CD4-positive, alpha-beta T cell (primary cell): ENCODE measurements at regions of chr2 and their contacts with region 1.

Region 1: DNA sequence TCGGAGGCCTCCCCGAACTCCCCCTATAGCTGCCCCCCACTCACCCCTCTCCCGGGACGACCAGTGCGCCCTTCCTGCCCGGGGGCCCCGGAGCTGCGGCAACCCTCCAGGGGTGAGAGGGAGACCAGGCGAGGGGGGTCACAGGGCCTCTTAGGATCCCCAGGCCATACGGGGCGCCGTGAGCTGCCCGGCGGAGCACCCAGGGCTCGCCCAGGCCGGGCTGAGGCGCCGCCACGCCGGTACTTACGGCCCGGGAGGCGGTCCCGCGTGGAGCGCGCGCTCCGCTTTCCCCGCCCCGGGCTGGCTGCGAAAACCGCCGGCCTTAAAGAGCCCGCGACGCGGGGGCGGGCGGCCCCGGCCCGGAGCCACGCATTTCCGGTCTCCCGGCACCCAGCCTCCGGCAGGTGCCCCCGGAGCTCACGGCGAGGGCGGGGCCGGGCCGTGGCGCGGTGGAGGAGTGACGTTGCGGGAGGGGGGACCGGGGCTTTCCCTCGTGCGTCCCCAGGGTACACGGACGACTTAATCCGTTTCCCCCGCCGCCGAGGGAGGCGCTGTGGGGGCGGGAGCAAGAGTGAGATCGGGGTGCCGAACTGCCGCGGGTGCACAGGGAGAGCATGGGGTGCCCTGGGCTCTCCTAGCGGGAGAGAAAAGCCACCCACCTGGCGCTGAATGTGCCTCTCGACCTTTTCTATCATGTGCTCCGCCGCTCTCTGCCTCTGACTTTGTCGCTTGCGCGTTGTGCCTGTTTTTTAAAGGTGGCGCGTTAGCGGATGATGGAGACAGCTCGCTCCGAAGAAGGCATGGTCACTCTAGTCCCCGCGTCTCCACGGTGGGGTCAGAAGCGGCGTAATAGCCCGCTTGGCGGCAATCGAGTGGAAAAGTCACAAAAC is at the start of gene METTL21A:
- DNase-seq: peak; percentile 89 to 99 (median 92)
- ATAC-seq: peak; percentile 77
- H3K4me3 ChIP-seq: peak within 1 kb of the TSS; percentile 99
- H3K4me3 Mint-ChIP-seq: peak within 1 kb of the TSS; percentile 98
- H3K27ac ChIP-seq: peak within 1 kb of the TSS; percentile 97 to 98
- H3K27ac Mint-ChIP-seq: peak within 1 kb of the TSS; percentile 96
- H3K4me1 ChIP-seq: peaks cover 46% of the 10 kb centered on the region
- H3K4me1 Mint-ChIP-seq: peaks cover 51% of the 10 kb centered on the region
- H3K27me3 ChIP-seq: no peaks in the 10 kb centered on the region
- H3K27me3 Mint-ChIP-seq: no peaks in the 10 kb centered on the region
- CTCF ChIP-seq: peak; percentile 68
- total RNA-seq, gene METTL21A: 10.8 to 11.9 TPM

Region 2: DNA sequence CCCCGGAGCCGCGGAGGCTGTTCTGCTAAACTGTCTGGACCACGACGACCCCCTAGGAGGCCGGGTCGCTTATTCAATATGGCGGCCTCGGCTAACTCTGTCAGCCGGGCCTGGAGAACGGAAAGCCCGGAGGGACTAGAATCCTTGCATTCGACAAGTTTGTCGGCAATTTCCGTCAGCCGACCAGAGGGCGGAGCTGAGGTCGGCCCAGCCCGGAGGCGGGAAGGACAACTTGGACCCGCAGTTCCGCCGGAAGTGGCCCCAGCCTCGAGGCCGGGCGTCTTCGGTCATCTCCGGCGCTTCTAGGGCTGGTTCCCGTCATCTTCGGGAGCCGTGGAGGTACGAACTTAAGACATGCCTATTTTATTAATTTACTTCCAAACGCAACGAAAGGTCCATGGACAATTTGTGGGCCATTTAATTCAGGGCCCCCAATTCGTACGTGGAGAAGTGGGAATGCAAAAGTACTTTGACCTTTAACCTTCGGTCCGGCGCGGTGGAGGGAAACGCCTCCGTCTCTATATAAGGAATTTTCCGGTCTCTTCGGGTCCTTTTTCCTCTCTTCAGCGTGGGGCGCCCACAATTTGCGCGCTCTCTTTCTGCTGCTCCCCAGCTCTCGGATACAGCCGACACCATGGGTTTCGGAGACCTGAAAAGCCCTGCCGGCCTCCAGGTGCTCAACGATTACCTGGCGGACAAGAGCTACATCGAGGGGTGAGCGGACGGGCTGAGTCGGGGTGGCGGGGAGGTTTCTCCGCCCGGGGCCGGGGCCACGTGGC is 1465.7 kb before region 1 on chr2 and contains the starts of genes EEF1B2 and NDUFS1:
- CTCF ChIA-PET with region 1: interaction called, 4 read pairs
- POLR2A ChIA-PET with region 1: interaction called, 8 read pairs
- intact Hi-C with region 1: loop called in 1 of 2 experiments (anchors 10 kb)
- DNase-seq: peak; percentile 91 to 99 (median 95)
- ATAC-seq: peak; percentile 82
- H3K4me3 ChIP-seq: peak within 1 kb of the TSS; percentile 82
- H3K4me3 Mint-ChIP-seq: peak within 1 kb of the TSS; percentile 99
- H3K27ac ChIP-seq: peak within 1 kb of the TSS; percentile 85 to 92
- H3K27ac Mint-ChIP-seq: peak within 1 kb of the TSS; percentile 97
- H3K4me1 ChIP-seq: peaks cover 39% of the 10 kb centered on the region
- H3K4me1 Mint-ChIP-seq: peaks cover 71% of the 10 kb centered on the region
- H3K27me3 ChIP-seq: no peaks in the 10 kb centered on the region
- H3K27me3 Mint-ChIP-seq: no peaks in the 10 kb centered on the region
- CTCF ChIP-seq: no peak
- total RNA-seq, gene EEF1B2: 1,109 to 1,132 TPM
- total RNA-seq, gene NDUFS1: 33.4 to 34.3 TPM

Region 3: GRCh38 chr2:206971805-206972204 is 653.5 kb before region 1 on chr2:
- CTCF ChIA-PET with region 1: no interaction called
- POLR2A ChIA-PET with region 1: no interaction called
- intact Hi-C with region 1: no loop called
- DNase-seq: no peak
- ATAC-seq: no peak
- H3K4me3 ChIP-seq: no peak overlapping the region
- H3K4me3 Mint-ChIP-seq: no peak overlapping the region
- H3K27ac ChIP-seq: no peak overlapping the region
- H3K27ac Mint-ChIP-seq: no peak overlapping the region
- H3K4me1 ChIP-seq: no peaks in the 10 kb centered on the region
- H3K4me1 Mint-ChIP-seq: no peaks in the 10 kb centered on the region
- H3K27me3 ChIP-seq: no peaks in the 10 kb centered on the region
- H3K27me3 Mint-ChIP-seq: peaks cover 8% of the 10 kb centered on the region
- CTCF ChIP-seq: no peak

Region 4: DNA sequence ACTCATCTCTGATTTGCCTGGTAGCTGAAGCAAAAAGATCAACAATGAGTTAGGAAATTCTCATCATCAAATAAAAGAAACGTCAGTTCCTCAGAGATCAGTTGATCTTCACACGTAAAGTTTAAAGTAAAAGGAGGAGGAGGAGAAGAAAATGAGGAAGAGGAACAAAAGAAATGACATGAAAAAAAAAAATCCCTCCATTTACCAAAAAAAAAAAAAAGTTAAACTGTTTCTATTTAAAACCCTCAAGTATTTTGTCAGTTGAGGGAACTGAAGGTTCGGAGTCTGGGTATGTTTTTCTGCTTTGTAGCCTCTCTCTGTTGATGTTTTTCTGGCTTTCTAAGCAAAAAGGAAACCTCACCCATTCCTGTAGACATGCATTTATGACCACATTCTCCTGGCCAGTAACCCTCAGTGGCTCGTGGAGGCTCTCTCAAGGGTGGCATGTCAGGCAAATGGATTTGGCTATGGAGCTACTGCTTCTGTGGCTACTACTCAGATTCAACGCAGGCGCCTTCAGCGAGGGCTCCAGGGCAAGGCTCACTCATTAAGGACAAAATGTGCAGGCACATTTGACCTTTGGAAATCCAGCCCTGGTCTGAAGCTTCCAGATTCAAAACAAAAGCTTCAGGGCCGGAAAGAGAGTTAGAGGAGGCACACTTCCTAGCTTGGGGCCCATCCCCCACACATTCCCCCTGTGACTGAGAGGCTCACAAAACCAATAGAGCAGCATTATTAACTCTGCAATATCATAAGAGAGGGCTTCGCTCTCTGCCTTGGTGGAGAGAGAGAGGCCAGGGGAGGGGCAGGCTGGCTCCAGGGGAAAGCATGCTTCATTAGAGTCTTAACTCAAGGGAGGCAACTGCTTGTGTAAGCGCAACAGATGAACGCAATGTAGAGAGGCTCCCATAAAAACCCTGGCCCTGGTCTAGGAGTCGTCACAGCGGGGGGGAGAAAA is 481.8 kb before region 1 on chr2:
- CTCF ChIA-PET with region 1: no interaction called
- POLR2A ChIA-PET with region 1: interaction called, 10 read pairs
- intact Hi-C with region 1: no loop called
- DNase-seq: peak; percentile 35 to 80 (median 60)
- ATAC-seq: peak; percentile 74
- H3K4me3 ChIP-seq: peak overlapping the region; percentile 52
- H3K4me3 Mint-ChIP-seq: peak overlapping the region; percentile 49
- H3K27ac ChIP-seq: peak overlapping the region; percentile 89 to 91
- H3K27ac Mint-ChIP-seq: peak overlapping the region; percentile 89
- H3K4me1 ChIP-seq: peaks cover 43% of the 10 kb centered on the region
- H3K4me1 Mint-ChIP-seq: peaks cover 69% of the 10 kb centered on the region
- H3K27me3 ChIP-seq: no peaks in the 10 kb centered on the region
- H3K27me3 Mint-ChIP-seq: no peaks in the 10 kb centered on the region
- CTCF ChIP-seq: no peak

Region 5: GRCh38 chr2:207710814-207711740 is 85.8 kb after region 1 on chr2 and contains the start of gene CCNYL1:
- CTCF ChIA-PET with region 1: interaction called, 29 read pairs
- POLR2A ChIA-PET with region 1: interaction called, 102 read pairs
- intact Hi-C with region 1: loop called (anchors 1 to 2 kb)
- DNase-seq: peak; percentile 95 to 99 (median 97)
- ATAC-seq: peak; percentile 97
- H3K4me3 ChIP-seq: peak within 1 kb of the TSS; percentile 98
- H3K4me3 Mint-ChIP-seq: peak within 1 kb of the TSS; percentile 95
- H3K27ac ChIP-seq: peak within 1 kb of the TSS; percentile 49 to 75
- H3K27ac Mint-ChIP-seq: peak within 1 kb of the TSS; percentile 82
- H3K4me1 ChIP-seq: peaks cover 23% of the 10 kb centered on the region
- H3K4me1 Mint-ChIP-seq: peaks cover 23% of the 10 kb centered on the region
- H3K27me3 ChIP-seq: no peaks in the 10 kb centered on the region
- H3K27me3 Mint-ChIP-seq: no peaks in the 10 kb centered on the region
- CTCF ChIP-seq: no peak
- total RNA-seq, gene CCNYL1: 8.7 to 11.1 TPM

Region 6: DNA sequence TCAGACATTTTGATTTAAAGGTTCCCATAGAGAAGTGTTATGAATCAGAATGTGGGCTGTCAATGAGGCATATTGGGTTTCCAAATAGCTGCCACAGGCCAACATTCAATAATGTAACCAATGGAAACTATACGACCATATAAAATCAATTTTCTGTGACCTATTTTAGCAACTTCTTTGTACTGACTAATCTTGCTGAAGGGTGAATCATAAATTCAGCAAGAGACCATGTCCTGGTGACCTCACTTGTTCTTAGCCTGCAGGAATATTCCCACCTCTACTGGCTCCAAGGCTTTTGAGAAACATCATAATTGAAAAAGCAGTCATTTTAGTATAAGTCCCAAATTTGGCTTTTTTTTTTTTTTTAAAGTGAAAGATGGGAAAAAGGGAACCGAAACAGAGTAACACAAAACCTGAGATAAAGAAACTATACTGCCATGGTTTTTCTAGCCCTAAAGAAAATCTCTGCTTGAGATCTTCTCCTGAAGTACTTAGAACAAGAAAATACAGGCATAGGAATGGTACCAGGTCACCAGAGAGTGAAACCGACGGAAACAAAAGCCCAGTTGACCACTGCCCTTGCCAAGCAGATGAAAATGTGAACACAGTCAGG is 368.0 kb after region 1 on chr2:
- CTCF ChIA-PET with region 1: no interaction called
- POLR2A ChIA-PET with region 1: no interaction called
- intact Hi-C with region 1: no loop called
- DNase-seq: no peak
- ATAC-seq: no peak
- H3K4me3 ChIP-seq: no peak overlapping the region
- H3K4me3 Mint-ChIP-seq: no peak overlapping the region
- H3K27ac ChIP-seq: no peak overlapping the region
- H3K27ac Mint-ChIP-seq: no peak overlapping the region
- H3K4me1 ChIP-seq: no peaks in the 10 kb centered on the region
- H3K4me1 Mint-ChIP-seq: peaks cover 38% of the 10 kb centered on the region
- H3K27me3 ChIP-seq: no peaks in the 10 kb centered on the region
- H3K27me3 Mint-ChIP-seq: no peaks in the 10 kb centered on the region
- CTCF ChIP-seq: no peak

Region 7: GRCh38 chr2:208025037-208025813 is 400.0 kb after region 1 on chr2 and contains the start of gene PLEKHM3:
- CTCF ChIA-PET with region 1: interaction called, 5 read pairs
- POLR2A ChIA-PET with region 1: interaction called, 19 read pairs
- intact Hi-C with region 1: loop called in 1 of 2 experiments (anchors 5 kb)
- DNase-seq: peak; percentile 39 to 83 (median 67)
- ATAC-seq: peak; percentile 74
- H3K4me3 ChIP-seq: peak within 1 kb of the TSS; percentile 82
- H3K4me3 Mint-ChIP-seq: peak within 1 kb of the TSS; percentile 89
- H3K27ac ChIP-seq: peak within 1 kb of the TSS; percentile 58 to 63
- H3K27ac Mint-ChIP-seq: peak within 1 kb of the TSS; percentile 92
- H3K4me1 ChIP-seq: peaks cover 10% of the 10 kb centered on the region
- H3K4me1 Mint-ChIP-seq: peaks cover 21% of the 10 kb centered on the region
- H3K27me3 ChIP-seq: no peaks in the 10 kb centered on the region
- H3K27me3 Mint-ChIP-seq: no peaks in the 10 kb centered on the region
- CTCF ChIP-seq: no peak
- total RNA-seq, gene PLEKHM3: 11.3 to 11.6 TPM

Region 8: GRCh38 chr2:208254871-208255556 is 629.8 kb after region 1 on chr2 and contains the start of gene IDH1:
- CTCF ChIA-PET with region 1: no interaction called
- POLR2A ChIA-PET with region 1: no interaction called
- intact Hi-C with region 1: loop called in 1 of 2 experiments (anchors 5 kb)
- DNase-seq: peak; percentile 87 to 98 (median 92)
- ATAC-seq: peak; percentile 80
- H3K4me3 ChIP-seq: peak within 1 kb of the TSS; percentile 86
- H3K4me3 Mint-ChIP-seq: peak within 1 kb of the TSS; percentile 100
- H3K27ac ChIP-seq: peak within 1 kb of the TSS; percentile 37 to 53
- H3K27ac Mint-ChIP-seq: peak within 1 kb of the TSS; percentile 74
- H3K4me1 ChIP-seq: peaks cover 20% of the 10 kb centered on the region
- H3K4me1 Mint-ChIP-seq: peaks cover 25% of the 10 kb centered on the region
- H3K27me3 ChIP-seq: no peaks in the 10 kb centered on the region
- H3K27me3 Mint-ChIP-seq: no peaks in the 10 kb centered on the region
- CTCF ChIP-seq: no peak
- total RNA-seq, gene IDH1: 3.0 to 3.4 TPM